ENCODE measurements at regions of chr12 and their contacts with region 1.

Region 1: GRCh38 chr12:56839915-56840325 is 76.8 kb downstream of the HSD17B6 start:
- DNase-seq: peak; percentile 71
- H3K4me3 Mint-ChIP-seq: no peak overlapping the region
- H3K27ac Mint-ChIP-seq: no peak overlapping the region
- H3K4me1 Mint-ChIP-seq: peaks cover 30% of the 10 kb centered on the region
- H3K27me3 Mint-ChIP-seq: no peaks in the 10 kb centered on the region
- CTCF ChIP-seq: peak; percentile 54

Region 2: DNA sequence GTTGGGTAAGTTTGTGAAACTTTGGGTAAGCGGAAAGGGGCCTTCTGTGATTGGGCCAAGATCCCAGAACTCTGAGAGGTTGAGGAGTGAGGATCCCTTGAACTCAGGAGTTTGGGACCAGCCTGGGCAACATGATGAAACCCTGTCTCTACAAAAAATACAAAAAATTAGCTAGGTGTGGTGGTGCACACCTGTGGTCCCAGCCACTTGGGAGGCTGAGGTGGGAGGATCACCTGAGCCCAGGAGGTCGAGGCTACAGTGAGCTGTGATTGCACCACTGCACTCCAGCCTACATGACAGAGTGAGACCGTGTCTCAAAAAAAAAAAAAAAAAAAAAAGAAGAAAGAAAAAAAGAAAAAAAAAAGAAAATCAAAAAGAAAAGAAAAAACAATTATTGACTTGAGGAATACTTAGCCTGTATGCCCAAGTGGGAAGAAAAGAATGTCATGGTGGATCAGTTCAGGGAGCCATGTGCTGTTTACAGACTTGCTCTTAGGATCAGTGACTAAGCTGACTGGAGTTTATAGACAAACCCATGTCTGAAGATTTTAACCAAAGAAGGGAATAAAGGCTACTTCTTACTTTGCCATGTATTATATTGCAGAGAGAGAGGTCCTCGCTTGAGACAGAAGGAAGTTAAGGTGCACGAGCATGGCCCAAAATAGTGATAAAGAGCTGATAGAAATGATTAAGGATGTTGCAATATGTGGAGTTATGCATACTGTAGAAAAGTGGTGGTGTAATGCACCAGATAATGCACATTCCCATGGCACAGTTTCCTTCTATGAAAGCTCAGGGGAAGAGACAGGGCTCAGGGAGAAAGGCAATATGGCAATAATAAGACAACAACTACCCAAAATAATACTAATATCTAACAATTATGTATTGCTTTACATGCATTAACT is 75.9 kb before region 1 on chr12:
- CTCF ChIA-PET with region 1: interaction called, 3 read pairs
- POLR2A ChIA-PET with region 1: interaction called, 3 read pairs
- intact Hi-C with region 1: loop called (anchors 5 kb)
- DNase-seq: no peak
- H3K4me3 Mint-ChIP-seq: no peak overlapping the region
- H3K27ac Mint-ChIP-seq: no peak overlapping the region
- H3K4me1 Mint-ChIP-seq: peaks cover 23% of the 10 kb centered on the region
- H3K27me3 Mint-ChIP-seq: no peaks in the 10 kb centered on the region
- CTCF ChIP-seq: no peak

Region 3: GRCh38 chr12:56955631-56956256 is 115.8 kb after region 1 on chr12:
- CTCF ChIA-PET with region 1: no interaction called
- POLR2A ChIA-PET with region 1: no interaction called
- intact Hi-C with region 1: no loop called
- DNase-seq: peak; percentile 65
- H3K4me3 Mint-ChIP-seq: no peak overlapping the region
- H3K27ac Mint-ChIP-seq: no peak overlapping the region
- H3K4me1 Mint-ChIP-seq: peaks cover 28% of the 10 kb centered on the region
- H3K27me3 Mint-ChIP-seq: no peaks in the 10 kb centered on the region
- CTCF ChIP-seq: no peak